CD4-positive, alpha-beta memory T cell (primary cell): ENCODE measurements at regions of chr10 and their contacts with region 1.

Region 1: GRCh38 chr10:87771871-87772500 is 46.0 kb downstream of the ATAD1 start:
- DNase-seq: peak in 3 of 5 donors; percentile 8 to 11 (median 10)
- H3K4me3 ChIP-seq: no peak overlapping the region
- H3K4me3 Mint-ChIP-seq: no peak overlapping the region
- H3K27ac ChIP-seq: no peak overlapping the region
- H3K27ac Mint-ChIP-seq: peak overlapping the region in 1 of 7 donors; percentile 60
- H3K4me1 ChIP-seq: no peaks in the 10 kb centered on the region
- H3K4me1 Mint-ChIP-seq: peaks cover 0 to 5% (median 3%) of the 10 kb centered on the region in 4 donors
- H3K27me3 ChIP-seq: no peaks in the 10 kb centered on the region
- H3K27me3 Mint-ChIP-seq: no peaks in the 10 kb centered on the region

Region 2: DNA sequence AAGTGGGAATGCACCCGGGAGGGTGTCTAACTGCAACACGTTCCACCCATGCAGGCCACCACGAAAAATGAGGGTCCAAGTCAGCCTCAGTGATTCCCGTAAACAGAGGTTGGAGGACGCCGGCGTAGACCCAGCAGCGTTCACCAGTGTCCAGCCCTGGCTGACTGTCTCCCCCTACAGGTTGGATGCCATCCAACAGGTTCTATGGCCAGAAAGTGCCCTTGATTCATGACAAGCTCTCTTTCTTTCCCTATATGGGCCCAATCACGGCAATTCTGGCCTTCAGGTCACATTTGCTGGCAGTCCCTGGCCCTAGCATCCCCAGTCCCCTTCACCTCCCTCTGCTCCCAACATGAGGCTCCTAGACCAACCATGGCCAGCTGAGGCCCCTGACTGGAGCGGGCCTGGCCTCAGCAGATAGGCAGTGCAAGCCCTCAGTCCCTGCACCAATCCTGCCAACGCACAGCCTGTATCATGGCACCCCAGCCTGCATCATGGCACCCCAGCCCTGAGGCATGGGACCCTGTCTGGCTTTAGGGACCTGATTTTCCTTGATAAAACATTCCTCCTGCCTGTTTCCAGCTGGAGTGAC is 1632.8 kb before region 1 on chr10:
- CTCF ChIA-PET with region 1: no interaction called
- POLR2A ChIA-PET with region 1: no interaction called
- intact Hi-C with region 1: no loop called
- DNase-seq: peak in 2 of 5 donors; percentile 3 to 5
- H3K4me3 ChIP-seq: no peak overlapping the region
- H3K4me3 Mint-ChIP-seq: no peak overlapping the region
- H3K27ac ChIP-seq: no peak overlapping the region
- H3K27ac Mint-ChIP-seq: no peak overlapping the region
- H3K4me1 ChIP-seq: no peaks in the 10 kb centered on the region
- H3K4me1 Mint-ChIP-seq: no peaks in the 10 kb centered on the region
- H3K27me3 ChIP-seq: no peaks in the 10 kb centered on the region
- H3K27me3 Mint-ChIP-seq: peaks cover 0 to 3% of the 10 kb centered on the region in 2 donors

Region 3: DNA sequence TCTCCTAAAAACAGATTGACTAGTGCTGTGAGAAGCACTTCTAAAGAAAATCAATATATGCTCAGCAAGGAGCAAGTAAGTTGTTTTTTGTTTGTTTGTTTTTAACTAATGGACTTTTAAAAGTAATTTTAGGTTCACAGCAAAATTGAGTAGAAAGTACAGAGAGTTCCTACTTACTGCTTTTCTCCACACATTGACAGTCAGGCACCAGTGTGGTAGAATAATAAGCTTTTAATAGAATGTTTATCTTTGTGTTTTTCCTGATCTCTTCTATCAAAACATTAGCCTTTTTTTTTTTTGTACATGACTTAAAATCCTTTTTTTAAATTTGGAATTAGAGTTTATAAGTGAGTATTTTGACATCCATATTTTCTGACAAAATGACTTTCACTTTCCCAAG is 239.3 kb before region 1 on chr10:
- CTCF ChIA-PET with region 1: interaction called, 4 read pairs
- POLR2A ChIA-PET with region 1: no interaction called
- intact Hi-C with region 1: loop called (anchors 1 kb)
- DNase-seq: no peak
- H3K4me3 ChIP-seq: no peak overlapping the region
- H3K4me3 Mint-ChIP-seq: no peak overlapping the region
- H3K27ac ChIP-seq: no peak overlapping the region
- H3K27ac Mint-ChIP-seq: peak overlapping the region in 1 of 7 donors; percentile 2
- H3K4me1 ChIP-seq: peaks cover 7% of the 10 kb centered on the region
- H3K4me1 Mint-ChIP-seq: peaks cover 17 to 21% (median 18%) of the 10 kb centered on the region in 4 donors
- H3K27me3 ChIP-seq: no peaks in the 10 kb centered on the region
- H3K27me3 Mint-ChIP-seq: no peaks in the 10 kb centered on the region

Region 4: GRCh38 chr10:87659571-87660483 is 112.2 kb before region 1 on chr10 and contains the start of gene PAPSS2:
- CTCF ChIA-PET with region 1: no interaction called
- POLR2A ChIA-PET with region 1: no interaction called
- intact Hi-C with region 1: loop called (anchors 5 kb)
- DNase-seq: peak in 3 of 5 donors; percentile 4 to 13 (median 6)
- H3K4me3 ChIP-seq: peak within 1 kb of the TSS in 1 of 2 donors; percentile 6
- H3K4me3 Mint-ChIP-seq: peak within 1 kb of the TSS; percentile 73 to 87 (median 82)
- H3K27ac ChIP-seq: no peak within 1 kb of the TSS
- H3K27ac Mint-ChIP-seq: no peak within 1 kb of the TSS
- H3K4me1 ChIP-seq: peaks cover 7% of the 10 kb centered on the region
- H3K4me1 Mint-ChIP-seq: peaks cover 8 to 20% (median 11%) of the 10 kb centered on the region in 4 donors
- H3K27me3 ChIP-seq: peaks cover 23% of the 10 kb centered on the region
- H3K27me3 Mint-ChIP-seq: peaks cover 35 to 44% of the 10 kb centered on the region in 2 donors
- total RNA-seq, gene PAPSS2: 0.42 to 0.73 TPM

Region 5: GRCh38 chr10:87761892-87762291 is 10.1 kb before region 1 on chr10:
- CTCF ChIA-PET with region 1: interaction called, 14 read pairs
- POLR2A ChIA-PET with region 1: no interaction called
- intact Hi-C with region 1: no loop called
- DNase-seq: no peak
- H3K4me3 ChIP-seq: no peak overlapping the region
- H3K4me3 Mint-ChIP-seq: no peak overlapping the region
- H3K27ac ChIP-seq: no peak overlapping the region
- H3K27ac Mint-ChIP-seq: peak overlapping the region in 1 of 7 donors; percentile 41
- H3K4me1 ChIP-seq: no peaks in the 10 kb centered on the region
- H3K4me1 Mint-ChIP-seq: peaks cover 0 to 8% (median 1%) of the 10 kb centered on the region in 4 donors
- H3K27me3 ChIP-seq: no peaks in the 10 kb centered on the region
- H3K27me3 Mint-ChIP-seq: no peaks in the 10 kb centered on the region